ENCODE measurements at regions of chr3 and their contacts with region 1.

Region 1: GRCh38 chr3:98022978-98023820 is 11.9 kb downstream of the GABRR3 start:
- DNase-seq: peak; percentile 76
- H3K4me3 Mint-ChIP-seq: no peak overlapping the region
- H3K27ac Mint-ChIP-seq: no peak overlapping the region
- H3K4me1 Mint-ChIP-seq: peaks cover 10% of the 10 kb centered on the region
- H3K27me3 Mint-ChIP-seq: no peaks in the 10 kb centered on the region

Region 2: GRCh38 chr3:97793420-97794019 is 229.7 kb before region 1 on chr3:
- intact Hi-C with region 1: loop called (anchors 1 kb)
- DNase-seq: no peak
- H3K4me3 Mint-ChIP-seq: no peak overlapping the region
- H3K27ac Mint-ChIP-seq: no peak overlapping the region
- H3K4me1 Mint-ChIP-seq: peaks cover 2% of the 10 kb centered on the region
- H3K27me3 Mint-ChIP-seq: no peaks in the 10 kb centered on the region

Region 3: GRCh38 chr3:97971677-97972567 is 51.3 kb before region 1 on chr3 and contains the start of gene RIOX2:
- intact Hi-C with region 1: loop called (anchors 2 kb)
- DNase-seq: peak; percentile 75
- H3K4me3 Mint-ChIP-seq: peak within 1 kb of the TSS; percentile 86
- H3K27ac Mint-ChIP-seq: peak within 1 kb of the TSS; percentile 89
- H3K4me1 Mint-ChIP-seq: peaks cover 68% of the 10 kb centered on the region
- H3K27me3 Mint-ChIP-seq: no peaks in the 10 kb centered on the region
- total RNA-seq, gene RIOX2: 59.9 and 63.2 TPM in 2 replicates

Region 4: GRCh38 chr3:97981886-97982285 is 41.3 kb before region 1 on chr3:
- intact Hi-C with region 1: loop called (anchors 2 kb)
- DNase-seq: no peak
- H3K4me3 Mint-ChIP-seq: peak overlapping the region; percentile 1
- H3K27ac Mint-ChIP-seq: peak overlapping the region; percentile 70
- H3K4me1 Mint-ChIP-seq: peaks cover 27% of the 10 kb centered on the region
- H3K27me3 Mint-ChIP-seq: no peaks in the 10 kb centered on the region

Region 5: GRCh38 chr3:98086873-98087272 is 63.7 kb after region 1 on chr3 and contains the start of gene OR5AC2:
- intact Hi-C with region 1: no loop called
- DNase-seq: no peak
- H3K4me3 Mint-ChIP-seq: no peak within 1 kb of the TSS
- H3K27ac Mint-ChIP-seq: no peak within 1 kb of the TSS
- H3K4me1 Mint-ChIP-seq: no peaks in the 10 kb centered on the region
- H3K27me3 Mint-ChIP-seq: peaks cover 2% of the 10 kb centered on the region
- total RNA-seq, gene OR5AC2: not detected in 2 replicates